Activated CD4-positive, alpha-beta T cell treated with anti-CD3 and anti-CD28 coated beads, Interleukin-2, amount 10 ng/mL, durations not matched to agents 24 days and 14 days (primary cell): ENCODE measurements at regions of chr2 and their contacts with region 1.

Region 1: GRCh38 chr2:134173338-134174016 is 80.4 kb upstream of the MGAT5 start:
- DNase-seq: no peak
- H3K4me3 Mint-ChIP-seq: no peak overlapping the region
- H3K27ac Mint-ChIP-seq: no peak overlapping the region
- H3K4me1 Mint-ChIP-seq: peaks cover 15% of the 10 kb centered on the region
- H3K27me3 Mint-ChIP-seq: no peaks in the 10 kb centered on the region

Region 2: GRCh38 chr2:134137182-134137611 is 36.3 kb before region 1 on chr2:
- intact Hi-C with region 1: loop called (anchors 5 kb)
- DNase-seq: peak; percentile 60
- H3K4me3 Mint-ChIP-seq: peak overlapping the region; percentile 61
- H3K27ac Mint-ChIP-seq: peak overlapping the region; percentile 81
- H3K4me1 Mint-ChIP-seq: peaks cover 24% of the 10 kb centered on the region
- H3K27me3 Mint-ChIP-seq: no peaks in the 10 kb centered on the region

Region 3: GRCh38 chr2:134154246-134154645 is 19.2 kb before region 1 on chr2:
- intact Hi-C with region 1: no loop called
- DNase-seq: no peak
- H3K4me3 Mint-ChIP-seq: no peak overlapping the region
- H3K27ac Mint-ChIP-seq: no peak overlapping the region
- H3K4me1 Mint-ChIP-seq: peaks cover 6% of the 10 kb centered on the region
- H3K27me3 Mint-ChIP-seq: no peaks in the 10 kb centered on the region

Region 4: DNA sequence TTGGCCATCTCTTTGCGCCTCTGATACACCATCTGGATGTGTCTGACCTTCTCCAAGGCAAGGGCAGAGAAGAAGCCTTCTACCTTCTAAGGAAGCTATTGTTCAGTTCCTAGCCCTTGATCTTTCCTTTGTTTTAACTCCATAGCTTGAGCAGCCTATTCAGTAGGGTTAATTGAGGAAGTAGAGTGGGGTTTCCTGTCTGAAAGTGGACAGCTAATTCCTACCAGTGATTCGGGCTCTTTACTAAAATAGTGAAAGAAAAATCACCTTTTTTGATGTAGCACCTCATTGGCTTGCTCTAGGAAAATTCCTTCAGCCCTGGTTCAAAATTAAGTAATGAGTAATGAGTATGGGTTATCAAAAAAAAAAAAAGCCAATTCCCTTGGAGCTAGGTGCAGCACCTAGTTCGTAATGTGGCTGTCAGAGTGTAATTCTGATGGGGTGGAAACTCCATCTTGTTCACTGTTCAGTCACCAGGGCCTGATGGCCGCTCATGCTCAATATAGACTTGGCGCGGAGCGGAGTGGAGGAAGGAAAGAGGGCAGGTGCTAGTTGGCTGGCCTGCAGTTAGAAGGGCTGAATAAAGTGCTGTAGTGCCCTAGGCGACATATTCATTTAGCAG is 77.5 kb after region 1 on chr2:
- intact Hi-C with region 1: loop called (anchors 2 kb)
- DNase-seq: no peak
- H3K4me3 Mint-ChIP-seq: no peak overlapping the region
- H3K27ac Mint-ChIP-seq: peak overlapping the region; percentile 8
- H3K4me1 Mint-ChIP-seq: peaks cover 72% of the 10 kb centered on the region
- H3K27me3 Mint-ChIP-seq: peaks cover 10% of the 10 kb centered on the region